ENCODE measurements at regions of chr14 and their contacts with region 1.

Region 1: GRCh38 chr14:70919774-70920173 is 12.5 kb downstream of the PCNX1 start:
- DNase-seq: peak; percentile 38
- ATAC-seq: peak; percentile 35
- H3K4me3 Mint-ChIP-seq: peak overlapping the region; percentile 13
- H3K27ac Mint-ChIP-seq: peak overlapping the region; percentile 68
- H3K4me1 Mint-ChIP-seq: peaks cover 85% of the 10 kb centered on the region
- H3K27me3 Mint-ChIP-seq: no peaks in the 10 kb centered on the region

Region 2: DNA sequence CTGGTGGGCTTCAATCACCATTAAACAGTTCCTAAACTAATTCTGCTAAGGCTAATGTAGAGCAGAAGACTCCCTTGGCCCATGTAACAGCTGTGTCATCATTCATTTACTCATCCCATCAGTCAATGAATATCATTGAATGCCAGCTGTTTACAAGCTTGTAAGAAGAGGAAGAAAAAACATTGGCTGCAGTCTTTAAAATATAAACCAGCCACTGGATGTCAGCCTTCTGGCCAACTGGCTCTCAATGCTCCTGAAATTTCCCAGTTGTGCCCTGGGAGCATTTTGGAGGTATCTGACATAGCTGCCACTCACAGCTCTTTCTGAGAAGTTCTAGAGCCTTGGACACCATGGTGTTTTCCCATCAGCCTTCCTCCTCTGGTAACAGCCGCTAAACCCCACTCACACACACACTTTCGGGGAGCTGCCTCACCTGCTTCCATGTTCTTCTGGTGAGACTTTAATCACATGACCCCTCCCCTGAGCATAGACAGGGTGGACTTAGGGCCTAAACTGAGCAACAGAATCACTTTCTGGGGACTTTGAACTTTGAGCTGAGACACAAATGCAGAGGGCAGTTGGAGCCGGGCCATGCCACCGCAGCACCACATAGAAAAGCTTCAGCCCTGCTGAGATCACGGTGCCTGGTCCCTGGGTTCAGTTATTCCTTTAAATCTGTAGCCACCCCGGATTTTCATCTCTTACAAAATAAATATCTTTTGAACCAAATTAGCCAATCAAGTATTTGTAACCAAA is 92.2 kb before region 1 on chr14:
- CTCF ChIA-PET with region 1: no interaction called
- POLR2A ChIA-PET with region 1: no interaction called
- intact Hi-C with region 1: no loop called
- DNase-seq: no peak
- ATAC-seq: no peak
- H3K4me3 Mint-ChIP-seq: no peak overlapping the region
- H3K27ac Mint-ChIP-seq: no peak overlapping the region
- H3K4me1 Mint-ChIP-seq: peaks cover 5% of the 10 kb centered on the region
- H3K27me3 Mint-ChIP-seq: peaks cover 13% of the 10 kb centered on the region

Region 3: GRCh38 chr14:70894868-70895267 is 24.9 kb before region 1 on chr14:
- CTCF ChIA-PET with region 1: no interaction called
- POLR2A ChIA-PET with region 1: no interaction called
- intact Hi-C with region 1: no loop called
- DNase-seq: peak; percentile 36
- ATAC-seq: peak; percentile 75
- H3K4me3 Mint-ChIP-seq: no peak overlapping the region
- H3K27ac Mint-ChIP-seq: peak overlapping the region; percentile 9
- H3K4me1 Mint-ChIP-seq: peaks cover 52% of the 10 kb centered on the region
- H3K27me3 Mint-ChIP-seq: peaks cover 7% of the 10 kb centered on the region

Region 4: GRCh38 chr14:70934502-70935134 is 14.8 kb after region 1 on chr14:
- CTCF ChIA-PET with region 1: interaction called, 4 read pairs
- POLR2A ChIA-PET with region 1: no interaction called
- intact Hi-C with region 1: loop called in 1 of 2 experiments (anchors 2 kb)
- DNase-seq: peak; percentile 36
- ATAC-seq: peak; percentile 87
- H3K4me3 Mint-ChIP-seq: peak overlapping the region; percentile 43
- H3K27ac Mint-ChIP-seq: peak overlapping the region; percentile 92
- H3K4me1 Mint-ChIP-seq: peaks cover 76% of the 10 kb centered on the region
- H3K27me3 Mint-ChIP-seq: no peaks in the 10 kb centered on the region

Region 5: DNA sequence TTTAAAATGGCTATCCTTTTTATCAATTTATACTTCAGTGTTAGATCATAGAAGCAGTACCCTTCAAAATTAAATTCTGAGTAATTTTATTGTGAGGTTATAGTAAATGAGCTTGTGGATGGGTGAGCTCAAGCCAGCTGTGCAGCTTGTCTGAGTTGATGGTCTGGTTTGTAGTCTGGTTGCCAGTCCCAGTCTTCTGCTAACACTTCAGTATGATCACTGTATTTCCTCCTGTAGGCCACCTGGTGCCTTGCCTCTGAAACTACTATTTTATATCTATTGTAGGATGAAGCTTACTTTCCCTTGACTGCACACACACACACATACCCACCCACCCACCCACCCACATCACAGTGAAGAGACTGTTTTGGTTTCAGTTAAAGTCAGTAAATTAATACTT is 483.9 kb after region 1 on chr14:
- CTCF ChIA-PET with region 1: no interaction called
- POLR2A ChIA-PET with region 1: no interaction called
- intact Hi-C with region 1: no loop called
- DNase-seq: peak; percentile 43
- ATAC-seq: peak; percentile 78
- H3K4me3 Mint-ChIP-seq: no peak overlapping the region
- H3K27ac Mint-ChIP-seq: no peak overlapping the region
- H3K4me1 Mint-ChIP-seq: peaks cover 34% of the 10 kb centered on the region
- H3K27me3 Mint-ChIP-seq: no peaks in the 10 kb centered on the region

Region 6: GRCh38 chr14:71497645-71498086 is 577.9 kb after region 1 on chr14:
- CTCF ChIA-PET with region 1: no interaction called
- POLR2A ChIA-PET with region 1: no interaction called
- intact Hi-C with region 1: no loop called
- DNase-seq: peak; percentile 11
- ATAC-seq: peak; percentile 93
- H3K4me3 Mint-ChIP-seq: no peak overlapping the region
- H3K27ac Mint-ChIP-seq: no peak overlapping the region
- H3K4me1 Mint-ChIP-seq: peaks cover 16% of the 10 kb centered on the region
- H3K27me3 Mint-ChIP-seq: no peaks in the 10 kb centered on the region

Measured in activated CD4-positive, alpha-beta T cell treated with anti-CD3 and anti-CD28 coated beads for 36 hours (primary cell).